ENCODE measurements at regions of chr16 and their contacts with region 1.

Region 1: DNA sequence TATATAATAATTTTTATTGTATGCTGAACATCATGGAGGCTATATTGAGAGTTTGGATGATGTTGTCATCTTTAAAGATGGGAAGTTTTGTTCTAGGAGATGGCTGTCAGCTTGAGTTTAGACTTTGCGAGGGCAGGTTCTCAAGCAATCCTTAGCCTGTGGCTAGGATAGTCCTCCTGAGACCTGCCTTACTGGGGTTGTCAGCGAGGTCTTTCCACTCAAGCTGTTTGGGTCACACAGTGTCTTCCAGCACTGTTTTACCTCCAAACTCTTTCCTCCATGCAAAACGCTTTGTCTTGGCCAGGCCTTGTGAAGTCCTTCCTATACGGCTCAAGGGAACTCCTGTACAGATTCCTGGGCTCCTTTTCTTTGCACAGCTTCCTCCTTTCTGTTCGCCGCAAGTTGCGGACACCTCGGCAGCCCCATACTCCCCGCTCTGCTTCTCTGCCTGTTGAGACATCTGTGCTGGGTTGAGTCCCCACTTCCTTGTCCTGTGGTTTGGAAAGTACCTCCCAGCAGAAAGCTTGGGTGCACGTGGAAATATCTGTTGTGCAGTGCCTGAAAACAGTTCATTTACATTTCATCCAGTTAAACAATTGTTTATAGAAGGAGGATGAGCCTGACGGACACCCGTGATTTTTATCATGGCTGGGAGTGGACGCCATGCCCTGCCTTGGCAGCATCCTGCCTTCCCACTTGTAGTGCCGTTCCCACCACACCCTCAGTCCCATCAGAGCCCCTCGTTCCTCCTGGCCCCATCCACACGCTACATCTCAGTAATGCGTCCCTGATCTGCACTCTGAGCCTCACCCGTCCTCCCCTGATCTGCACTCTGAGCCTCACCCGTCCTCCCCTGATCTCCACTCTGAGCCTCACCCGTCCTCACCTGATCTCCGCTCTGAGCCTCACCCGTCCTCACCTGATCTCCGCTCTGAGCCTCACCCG is 55.0 kb upstream of the CBFA2T3 start:
- DNase-seq: peak; percentile 57
- ATAC-seq: peak; percentile 99
- H3K4me3 Mint-ChIP-seq: peak overlapping the region; percentile 66
- H3K27ac Mint-ChIP-seq: peak overlapping the region; percentile 84
- H3K4me1 Mint-ChIP-seq: peaks cover 27% of the 10 kb centered on the region
- H3K27me3 Mint-ChIP-seq: peaks cover 7% of the 10 kb centered on the region
- CTCF ChIP-seq: no peak

Region 2: GRCh38 chr16:88844419-88845036 is 187.5 kb before region 1 on chr16:
- CTCF ChIA-PET with region 1: no interaction called
- POLR2A ChIA-PET with region 1: no interaction called
- intact Hi-C with region 1: no loop called
- DNase-seq: no peak
- ATAC-seq: no peak
- H3K4me3 Mint-ChIP-seq: no peak overlapping the region
- H3K27ac Mint-ChIP-seq: no peak overlapping the region
- H3K4me1 Mint-ChIP-seq: peaks cover 4% of the 10 kb centered on the region
- H3K27me3 Mint-ChIP-seq: no peaks in the 10 kb centered on the region
- CTCF ChIP-seq: no peak

Region 3: GRCh38 chr16:88983771-88984687 is 48.0 kb before region 1 on chr16:
- CTCF ChIA-PET with region 1: no interaction called
- POLR2A ChIA-PET with region 1: interaction called, 9 read pairs
- intact Hi-C with region 1: loop called (anchors 5 kb)
- DNase-seq: peak; percentile 82
- ATAC-seq: peak; percentile 82
- H3K4me3 Mint-ChIP-seq: peak overlapping the region; percentile 76
- H3K27ac Mint-ChIP-seq: peak overlapping the region; percentile 82
- H3K4me1 Mint-ChIP-seq: peaks cover 80% of the 10 kb centered on the region
- H3K27me3 Mint-ChIP-seq: no peaks in the 10 kb centered on the region
- CTCF ChIP-seq: no peak

Region 4: GRCh38 chr16:89004209-89004831 is 27.7 kb before region 1 on chr16:
- CTCF ChIA-PET with region 1: no interaction called
- POLR2A ChIA-PET with region 1: no interaction called
- intact Hi-C with region 1: loop called (anchors 5 kb)
- DNase-seq: no peak
- ATAC-seq: peak; percentile 40
- H3K4me3 Mint-ChIP-seq: peak overlapping the region; percentile 8
- H3K27ac Mint-ChIP-seq: no peak overlapping the region
- H3K4me1 Mint-ChIP-seq: peaks cover 27% of the 10 kb centered on the region
- H3K27me3 Mint-ChIP-seq: peaks cover 31% of the 10 kb centered on the region
- CTCF ChIP-seq: no peak

Region 5: DNA sequence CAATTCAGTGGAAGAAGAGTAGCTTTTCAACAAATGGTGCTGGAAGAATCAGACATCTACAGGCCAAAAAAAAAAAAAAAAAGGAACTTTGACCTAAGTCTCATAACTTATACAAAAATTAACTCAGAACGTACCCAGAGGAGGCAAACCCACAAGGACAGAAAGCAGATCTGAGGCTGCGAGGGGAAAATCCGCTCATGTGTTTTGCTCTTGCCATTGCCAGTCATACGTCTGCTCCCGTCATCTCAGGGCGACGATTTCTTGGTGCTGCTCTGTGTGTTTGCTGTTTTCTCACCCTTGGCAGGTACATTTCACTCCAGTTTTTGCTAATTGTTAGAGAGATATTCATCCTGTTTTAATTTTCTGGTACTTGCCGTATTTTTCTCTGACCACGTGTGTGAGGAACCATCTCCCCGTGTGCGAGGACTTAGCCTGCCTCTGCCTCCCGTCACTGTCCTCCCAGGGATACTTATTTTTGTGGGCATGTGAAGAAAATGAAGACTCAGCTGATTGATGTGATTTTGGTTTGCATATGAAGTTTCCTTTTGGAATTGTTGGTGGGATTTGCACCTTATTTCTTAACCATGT is 28.3 kb after region 1 on chr16:
- CTCF ChIA-PET with region 1: no interaction called
- POLR2A ChIA-PET with region 1: no interaction called
- intact Hi-C with region 1: loop called (anchors 2 kb)
- DNase-seq: peak; percentile 55
- ATAC-seq: peak; percentile 81
- H3K4me3 Mint-ChIP-seq: peak overlapping the region; percentile 68
- H3K27ac Mint-ChIP-seq: peak overlapping the region; percentile 89
- H3K4me1 Mint-ChIP-seq: peaks cover 50% of the 10 kb centered on the region
- H3K27me3 Mint-ChIP-seq: no peaks in the 10 kb centered on the region
- CTCF ChIP-seq: no peak

Region 6: DNA sequence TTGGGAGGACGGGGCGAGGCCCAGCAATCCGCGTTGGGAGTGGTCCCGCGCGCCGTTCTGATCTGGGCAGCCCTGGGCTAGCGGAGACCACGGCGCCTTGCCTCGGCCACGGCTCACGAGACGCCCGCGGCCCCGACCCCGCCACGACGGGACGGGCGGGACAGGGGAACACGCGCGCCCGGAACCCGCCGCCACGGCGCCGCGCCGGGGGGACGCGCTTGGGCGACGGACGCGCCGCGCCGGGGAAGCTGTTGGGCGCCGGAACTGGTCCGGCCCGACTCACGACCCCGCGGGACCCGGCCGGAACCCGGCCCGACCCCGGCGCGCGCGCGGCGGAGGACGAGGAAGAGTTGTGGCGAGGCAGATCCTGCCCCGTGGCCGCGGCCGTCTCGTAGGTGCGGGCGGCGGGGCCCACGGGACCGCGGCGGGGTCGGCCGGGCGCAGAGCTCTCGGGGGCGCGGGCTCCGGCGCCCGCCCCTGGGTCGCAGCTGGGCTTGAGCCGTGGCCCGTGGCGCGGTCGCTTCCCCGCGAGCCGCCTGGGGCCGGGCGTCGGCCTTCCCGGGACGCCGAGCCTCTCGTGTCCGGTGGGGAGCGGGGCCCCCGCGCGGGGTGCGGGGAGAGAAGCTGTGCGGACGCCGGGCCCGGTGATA is 61.7 kb after region 1 on chr16 and contains the start of gene ACSF3:
- CTCF ChIA-PET with region 1: no interaction called
- POLR2A ChIA-PET with region 1: no interaction called
- intact Hi-C with region 1: loop called (anchors 2 kb)
- DNase-seq: peak; percentile 77
- ATAC-seq: peak; percentile 72
- H3K4me3 Mint-ChIP-seq: peak within 1 kb of the TSS; percentile 97
- H3K27ac Mint-ChIP-seq: peak within 1 kb of the TSS; percentile 93
- H3K4me1 Mint-ChIP-seq: peaks cover 46% of the 10 kb centered on the region
- H3K27me3 Mint-ChIP-seq: peaks cover 16% of the 10 kb centered on the region
- CTCF ChIP-seq: no peak
- total RNA-seq, gene ACSF3: 59.6 and 78.0 TPM in 2 replicates

Measured in activated B cell treated with CpG ODN at 0.5 μM for 24 hours (primary cell).